ENCODE measurements at regions of chr11 and their contacts with region 1.

Region 1: DNA sequence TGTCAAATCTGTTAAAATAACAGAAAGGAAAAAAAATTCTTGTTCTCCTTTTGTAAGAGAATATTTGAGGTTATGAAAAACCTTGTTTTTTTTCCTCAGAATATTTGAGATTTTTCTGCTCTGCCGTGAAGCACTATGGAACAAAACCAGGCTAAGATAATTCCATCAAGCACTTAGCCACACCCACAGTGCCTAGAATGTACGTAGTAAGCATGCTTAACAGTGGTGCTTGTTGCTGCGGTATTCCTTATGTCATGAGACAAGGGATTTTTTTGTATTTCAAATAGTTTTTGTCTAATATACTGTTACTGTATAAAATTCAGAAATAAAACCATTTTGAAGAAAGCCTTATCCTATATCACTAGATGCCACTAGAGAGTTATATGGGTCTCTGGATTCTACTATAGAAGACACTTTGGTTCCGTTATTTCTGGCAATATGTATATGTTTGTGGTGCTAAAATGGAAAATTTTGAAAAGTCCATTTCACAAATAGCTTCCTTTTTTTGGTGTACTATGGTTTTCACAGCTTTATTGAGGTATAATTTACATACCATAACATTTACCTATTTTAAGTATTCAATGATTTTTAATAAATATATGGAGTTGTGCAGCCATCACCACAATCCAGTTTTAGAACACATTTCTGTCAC is 23.7 kb downstream of the PDHX start:
- DNase-seq: peak; percentile 14
- ATAC-seq: no peak
- H3K4me3 ChIP-seq: no peak overlapping the region
- H3K4me3 Mint-ChIP-seq: no peak overlapping the region
- H3K27ac ChIP-seq: no peak overlapping the region
- H3K27ac Mint-ChIP-seq: no peak overlapping the region
- H3K4me1 ChIP-seq: no peaks in the 10 kb centered on the region
- H3K4me1 Mint-ChIP-seq: peaks cover 13% of the 10 kb centered on the region
- H3K27me3 ChIP-seq: no peaks in the 10 kb centered on the region
- H3K27me3 Mint-ChIP-seq: no peaks in the 10 kb centered on the region
- CTCF ChIP-seq: peak; percentile 36

Region 2: DNA sequence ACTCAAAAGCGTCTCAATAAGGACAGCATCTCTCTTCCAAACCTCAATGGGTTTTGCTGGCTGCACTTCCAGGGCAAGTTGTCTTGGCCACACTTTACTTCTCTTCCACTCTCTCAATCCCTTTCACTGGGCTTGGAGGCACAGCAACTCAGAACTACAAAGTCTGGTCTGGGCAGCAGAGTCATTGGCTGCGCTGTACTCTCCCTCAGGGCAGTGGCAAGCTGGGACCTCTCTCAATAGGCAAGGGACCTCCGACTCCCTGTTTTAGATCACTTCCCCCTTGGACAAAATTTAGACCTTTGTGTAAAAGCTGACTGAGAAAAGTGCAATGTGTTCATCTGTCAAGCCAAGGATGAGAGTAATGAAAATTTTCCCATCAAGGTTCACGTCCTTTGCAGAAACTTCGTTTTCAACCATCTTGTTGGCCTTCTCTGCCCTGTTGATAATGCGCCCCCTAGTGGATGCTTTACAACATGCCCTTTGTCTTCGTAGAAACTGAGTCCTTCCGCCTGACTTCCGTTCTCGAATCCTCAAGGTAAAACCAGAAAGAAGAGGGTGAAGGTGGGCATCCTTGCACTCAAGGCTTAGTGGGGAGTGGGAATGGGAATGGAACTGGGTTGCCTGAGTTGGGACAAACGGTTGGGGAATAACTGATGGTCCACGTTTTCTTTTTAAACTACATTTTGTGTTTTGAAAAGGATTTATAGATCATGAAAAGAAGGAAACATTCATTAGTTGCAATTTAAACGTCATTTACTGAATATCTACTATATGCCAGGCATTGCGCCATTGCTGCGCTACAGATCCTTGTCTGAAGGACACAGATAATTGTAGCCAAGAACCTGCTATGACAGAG is 297.9 kb after region 1 on chr11:
- CTCF ChIA-PET with region 1: interaction called, 4 read pairs
- POLR2A ChIA-PET with region 1: no interaction called
- intact Hi-C with region 1: loop called (anchors 5 kb)
- DNase-seq: peak; percentile 81
- ATAC-seq: no peak
- H3K4me3 ChIP-seq: no peak overlapping the region
- H3K4me3 Mint-ChIP-seq: no peak overlapping the region
- H3K27ac ChIP-seq: no peak overlapping the region
- H3K27ac Mint-ChIP-seq: no peak overlapping the region
- H3K4me1 ChIP-seq: peaks cover 6 to 11% of the 10 kb centered on the region in 2 donors
- H3K4me1 Mint-ChIP-seq: peaks cover 22% of the 10 kb centered on the region
- H3K27me3 ChIP-seq: no peaks in the 10 kb centered on the region
- H3K27me3 Mint-ChIP-seq: no peaks in the 10 kb centered on the region
- CTCF ChIP-seq: peak; percentile 90

Measured in B cell (primary cell).